CD4-positive, alpha-beta memory T cell (primary cell): ENCODE measurements at regions of chrX and their contacts with region 1.

Region 1: DNA sequence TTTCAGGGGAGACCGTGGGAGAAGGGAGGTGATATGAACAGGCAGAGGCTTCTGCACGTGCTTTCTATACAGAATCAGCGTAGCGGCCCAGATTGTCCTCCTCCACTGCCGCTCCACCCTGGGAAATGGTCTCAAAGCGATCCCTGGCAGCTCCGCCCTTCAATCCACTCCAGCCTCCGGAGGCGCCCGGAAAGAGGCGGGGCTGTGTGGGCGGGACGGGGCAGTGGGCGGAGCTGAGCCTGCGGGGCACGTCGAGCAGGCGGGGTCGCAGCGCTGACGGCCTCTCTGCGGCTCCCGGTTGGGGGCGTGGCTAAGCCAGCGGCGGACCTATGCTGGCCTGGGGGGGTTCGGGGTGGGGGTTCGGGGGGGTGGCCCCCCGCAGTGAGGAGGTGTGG is 210 bp upstream of the SMIM10L2A start:
- DNase-seq: peak; percentile 81 to 86 (median 82)
- H3K4me3 ChIP-seq: peak overlapping the region in 1 of 2 donors; percentile 28
- H3K4me3 Mint-ChIP-seq: peak overlapping the region; percentile 30 to 84 (median 74)
- H3K27ac ChIP-seq: no peak overlapping the region
- H3K27ac Mint-ChIP-seq: peak overlapping the region in 2 of 7 donors; percentile 3 to 51
- H3K4me1 ChIP-seq: peaks cover 5% of the 10 kb centered on the region
- H3K4me1 Mint-ChIP-seq: peaks cover 5 to 13% (median 6%) of the 10 kb centered on the region in 4 donors
- H3K27me3 ChIP-seq: no peaks in the 10 kb centered on the region
- H3K27me3 Mint-ChIP-seq: no peaks in the 10 kb centered on the region

Region 2: DNA sequence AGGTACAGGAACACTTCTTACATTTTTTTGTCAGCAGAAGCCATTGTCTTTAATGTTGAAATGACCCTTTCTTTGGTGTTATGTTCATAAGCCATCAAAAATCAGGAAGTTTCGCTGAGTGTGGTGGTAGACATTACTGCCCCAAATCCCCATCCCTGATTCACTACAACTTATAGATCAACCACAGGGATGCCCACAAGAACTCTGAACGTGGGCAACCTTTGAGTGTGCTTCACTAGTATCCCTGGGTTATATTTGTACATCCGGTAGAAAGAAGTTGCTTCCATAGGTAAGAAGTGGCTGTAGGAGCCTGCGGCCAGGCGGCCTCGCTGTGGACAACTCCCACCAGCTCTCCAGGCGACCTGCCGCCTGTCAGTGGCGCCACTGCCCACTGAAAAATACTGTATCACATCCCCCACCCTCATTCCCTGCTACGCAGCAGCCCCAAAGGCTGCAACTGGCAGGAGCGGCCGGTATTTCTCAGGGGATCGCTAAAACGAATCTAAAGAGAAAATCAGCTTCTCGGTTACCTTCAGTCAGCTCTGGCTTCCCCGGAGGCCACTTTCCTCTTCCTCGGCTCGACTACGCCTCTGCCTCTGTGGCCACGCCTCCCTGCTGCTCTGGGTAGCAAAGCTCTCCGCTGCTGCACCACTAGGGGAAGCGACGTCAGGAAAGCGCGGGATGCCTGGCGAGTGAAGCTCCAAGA is 126.1 kb before region 1 on chrX:
- CTCF ChIA-PET with region 1: no interaction called
- POLR2A ChIA-PET with region 1: interaction called, 4 read pairs
- intact Hi-C with region 1: loop called (anchors 5 kb)
- DNase-seq: peak; percentile 51 to 71 (median 63)
- H3K4me3 ChIP-seq: peak overlapping the region; percentile 29 to 57
- H3K4me3 Mint-ChIP-seq: peak overlapping the region; percentile 91 to 95 (median 93)
- H3K27ac ChIP-seq: peak overlapping the region; percentile 44
- H3K27ac Mint-ChIP-seq: peak overlapping the region; percentile 86 to 96 (median 91)
- H3K4me1 ChIP-seq: peaks cover 20% of the 10 kb centered on the region
- H3K4me1 Mint-ChIP-seq: peaks cover 10 to 20% (median 13%) of the 10 kb centered on the region in 4 donors
- H3K27me3 ChIP-seq: no peaks in the 10 kb centered on the region
- H3K27me3 Mint-ChIP-seq: no peaks in the 10 kb centered on the region

Region 3: DNA sequence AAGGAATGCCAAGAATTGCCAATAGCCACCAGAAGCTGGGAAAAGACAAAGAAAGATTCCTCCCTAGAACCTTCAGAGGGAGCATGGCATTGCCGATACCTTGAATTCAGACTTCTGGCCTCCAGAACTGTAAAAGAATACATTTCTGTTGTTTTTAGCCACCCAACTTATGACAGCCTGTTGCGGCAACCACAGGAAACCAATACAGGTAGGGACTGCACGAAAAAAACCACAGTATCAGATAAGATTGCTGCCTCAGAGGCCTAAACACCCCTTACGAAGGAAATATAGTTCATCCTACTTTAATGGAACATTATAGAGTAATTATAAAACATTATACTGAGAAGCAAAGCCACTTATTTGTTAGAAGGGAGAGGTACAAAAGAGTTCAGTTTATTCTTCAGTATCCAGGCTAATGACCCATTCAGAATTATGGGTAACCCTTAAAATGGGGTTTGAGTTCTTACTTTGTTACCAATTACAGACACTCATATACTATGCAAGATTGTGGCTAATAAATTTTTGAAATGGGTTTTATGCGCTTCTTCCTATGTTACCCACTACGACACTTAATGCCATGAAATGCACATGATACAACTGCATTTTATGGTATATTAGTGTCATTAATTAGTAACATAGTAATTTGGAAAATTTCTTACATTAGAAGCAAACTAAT is 37.2 kb before region 1 on chrX:
- CTCF ChIA-PET with region 1: no interaction called
- POLR2A ChIA-PET with region 1: interaction called, 3 read pairs
- intact Hi-C with region 1: loop called (anchors 1 kb)
- DNase-seq: peak; percentile 68 to 80 (median 75)
- H3K4me3 ChIP-seq: peak overlapping the region in 1 of 2 donors; percentile 28
- H3K4me3 Mint-ChIP-seq: peak overlapping the region; percentile 21 to 81 (median 68)
- H3K27ac ChIP-seq: peak overlapping the region; percentile 39
- H3K27ac Mint-ChIP-seq: peak overlapping the region; percentile 56 to 90 (median 86)
- H3K4me1 ChIP-seq: peaks cover 48% of the 10 kb centered on the region
- H3K4me1 Mint-ChIP-seq: peaks cover 34 to 50% (median 40%) of the 10 kb centered on the region in 4 donors
- H3K27me3 ChIP-seq: no peaks in the 10 kb centered on the region
- H3K27me3 Mint-ChIP-seq: no peaks in the 10 kb centered on the region